Natural killer cell (primary cell): ENCODE measurements at regions of chr9 and their contacts with region 1.

Region 1: GRCh38 chr9:88388172-88388885 is at the start of gene SPIN1:
- DNase-seq: peak; percentile 85 to 93
- ATAC-seq: peak; percentile 82 to 95 (median 86)
- H3K4me3 ChIP-seq: peak within 1 kb of the TSS; percentile 82
- H3K4me3 Mint-ChIP-seq: peak within 1 kb of the TSS; percentile 95
- H3K27ac ChIP-seq: peak within 1 kb of the TSS; percentile 60
- H3K27ac Mint-ChIP-seq: peak within 1 kb of the TSS; percentile 86 to 95
- H3K4me1 ChIP-seq: peaks cover 14% of the 10 kb centered on the region
- H3K4me1 Mint-ChIP-seq: peaks cover 30 to 44% of the 10 kb centered on the region in 2 donors
- H3K27me3 ChIP-seq: no peaks in the 10 kb centered on the region
- H3K27me3 Mint-ChIP-seq: no peaks in the 10 kb centered on the region
- CTCF ChIP-seq: peak; percentile 45
- total RNA-seq, gene SPIN1: 30.3 to 46.1 (median 39.3) TPM

Region 2: GRCh38 chr9:88179062-88179521 is 209.2 kb before region 1 on chr9:
- intact Hi-C with region 1: loop called (anchors 5 kb)
- DNase-seq: peak; percentile 19 to 49
- ATAC-seq: peak; percentile 80 to 91 (median 86)
- H3K4me3 ChIP-seq: no peak overlapping the region
- H3K4me3 Mint-ChIP-seq: peak overlapping the region; percentile 54
- H3K27ac ChIP-seq: no peak overlapping the region
- H3K27ac Mint-ChIP-seq: peak overlapping the region; percentile 74 to 75
- H3K4me1 ChIP-seq: peaks cover 22% of the 10 kb centered on the region
- H3K4me1 Mint-ChIP-seq: peaks cover 27 to 39% of the 10 kb centered on the region in 2 donors
- H3K27me3 ChIP-seq: no peaks in the 10 kb centered on the region
- H3K27me3 Mint-ChIP-seq: peaks cover 13 to 18% of the 10 kb centered on the region in 2 donors
- CTCF ChIP-seq: no peak

Region 3: DNA sequence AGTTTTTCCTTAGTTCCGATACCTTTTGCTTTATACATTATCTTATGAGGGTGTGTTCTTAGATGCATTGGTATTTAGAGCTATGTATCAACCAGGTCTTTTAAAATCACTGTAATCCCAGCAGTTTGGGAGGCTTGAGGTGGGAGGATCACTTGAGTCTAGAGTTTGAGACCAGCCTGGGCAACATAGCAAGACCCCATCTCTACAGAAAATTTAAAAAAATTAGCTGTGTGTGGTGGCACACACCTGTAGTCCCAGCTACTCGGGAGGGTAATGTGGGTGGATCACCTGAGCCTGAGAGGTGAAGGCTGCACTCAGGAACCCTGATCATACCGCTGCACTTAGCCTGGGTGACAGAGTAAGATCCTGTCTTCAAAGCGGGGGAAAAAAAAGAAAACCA is 15.0 kb after region 1 on chr9:
- intact Hi-C with region 1: no loop called
- DNase-seq: no peak
- ATAC-seq: no peak
- H3K4me3 ChIP-seq: no peak overlapping the region
- H3K4me3 Mint-ChIP-seq: no peak overlapping the region
- H3K27ac ChIP-seq: no peak overlapping the region
- H3K27ac Mint-ChIP-seq: no peak overlapping the region
- H3K4me1 ChIP-seq: no peaks in the 10 kb centered on the region
- H3K4me1 Mint-ChIP-seq: peaks cover 33 to 43% of the 10 kb centered on the region in 2 donors
- H3K27me3 ChIP-seq: no peaks in the 10 kb centered on the region
- H3K27me3 Mint-ChIP-seq: no peaks in the 10 kb centered on the region
- CTCF ChIP-seq: no peak

Region 4: DNA sequence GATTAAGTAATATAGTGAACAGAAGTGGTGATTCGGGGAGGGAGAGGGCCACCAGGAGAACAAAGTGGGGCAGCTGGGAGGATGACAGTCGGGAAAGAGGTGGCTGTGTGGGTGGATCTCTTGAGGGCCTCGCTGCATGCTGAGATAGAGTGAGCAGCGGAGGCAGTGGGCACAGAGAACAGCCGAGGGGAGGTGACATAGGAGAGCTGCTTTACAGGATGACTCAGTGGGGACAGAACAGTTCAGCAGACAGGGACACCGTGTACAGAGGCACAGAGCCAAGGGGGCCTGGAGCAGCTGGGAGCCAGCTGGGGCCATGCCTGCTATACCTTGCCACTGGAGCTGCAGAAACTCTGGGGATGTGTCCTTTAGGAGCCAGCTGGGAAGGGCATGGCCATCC is 1490.4 kb after region 1 on chr9:
- intact Hi-C with region 1: no loop called
- DNase-seq: no peak
- ATAC-seq: no peak
- H3K4me3 ChIP-seq: no peak overlapping the region
- H3K4me3 Mint-ChIP-seq: no peak overlapping the region
- H3K27ac ChIP-seq: no peak overlapping the region
- H3K27ac Mint-ChIP-seq: no peak overlapping the region
- H3K4me1 ChIP-seq: no peaks in the 10 kb centered on the region
- H3K4me1 Mint-ChIP-seq: no peaks in the 10 kb centered on the region
- H3K27me3 ChIP-seq: no peaks in the 10 kb centered on the region
- H3K27me3 Mint-ChIP-seq: no peaks in the 10 kb centered on the region
- CTCF ChIP-seq: no peak